ENCODE measurements at regions of chr18 and their contacts with region 1.

Region 1: DNA sequence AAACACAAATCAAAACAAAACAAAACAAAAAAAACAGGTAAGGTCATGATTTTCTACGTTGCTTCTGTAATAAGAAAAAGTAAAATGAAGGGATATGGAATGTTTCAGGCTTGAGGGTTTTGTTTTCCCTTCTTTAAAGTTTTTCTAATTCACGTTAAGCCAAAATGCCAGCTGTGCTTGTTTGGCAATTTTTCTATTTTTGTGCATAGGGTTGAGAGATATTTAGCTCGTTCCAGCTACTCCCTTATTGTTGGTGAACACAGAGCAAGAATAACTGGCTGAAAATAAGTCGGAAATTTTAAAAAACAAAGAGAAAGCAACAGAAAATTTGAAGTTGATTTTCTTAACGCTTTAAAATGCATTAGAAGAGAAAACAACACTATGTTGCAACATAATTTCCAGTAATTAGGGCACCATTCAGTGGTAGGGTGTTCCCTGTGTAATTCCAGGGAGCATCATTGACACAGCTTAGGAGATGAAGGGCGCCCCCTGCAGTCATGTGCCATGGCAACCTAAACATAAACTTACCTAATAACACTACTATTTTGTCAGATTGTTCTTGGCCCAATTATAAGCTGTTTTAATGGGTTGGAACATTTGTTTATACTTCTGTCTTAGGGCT is 99.5 kb downstream of the DTNA start:
- DNase-seq: no peak
- H3K4me3 ChIP-seq: no peak overlapping the region
- H3K27ac ChIP-seq: no peak overlapping the region
- H3K4me1 ChIP-seq: no peaks in the 10 kb centered on the region
- H3K27me3 ChIP-seq: no peaks in the 10 kb centered on the region
- CTCF ChIP-seq: peak; percentile 35; the same call in 1 of the 2 replicates

Region 2: GRCh38 chr18:34550902-34551301 is 258.7 kb before region 1 on chr18:
- CTCF ChIA-PET with region 1: interaction called, 10 read pairs
- POLR2A ChIA-PET with region 1: no interaction called
- intact Hi-C with region 1: no loop called
- DNase-seq: no peak
- H3K4me3 ChIP-seq: no peak overlapping the region
- H3K27ac ChIP-seq: no peak overlapping the region
- H3K4me1 ChIP-seq: no peaks in the 10 kb centered on the region
- H3K27me3 ChIP-seq: no peaks in the 10 kb centered on the region
- CTCF ChIP-seq: no peak

Region 3: DNA sequence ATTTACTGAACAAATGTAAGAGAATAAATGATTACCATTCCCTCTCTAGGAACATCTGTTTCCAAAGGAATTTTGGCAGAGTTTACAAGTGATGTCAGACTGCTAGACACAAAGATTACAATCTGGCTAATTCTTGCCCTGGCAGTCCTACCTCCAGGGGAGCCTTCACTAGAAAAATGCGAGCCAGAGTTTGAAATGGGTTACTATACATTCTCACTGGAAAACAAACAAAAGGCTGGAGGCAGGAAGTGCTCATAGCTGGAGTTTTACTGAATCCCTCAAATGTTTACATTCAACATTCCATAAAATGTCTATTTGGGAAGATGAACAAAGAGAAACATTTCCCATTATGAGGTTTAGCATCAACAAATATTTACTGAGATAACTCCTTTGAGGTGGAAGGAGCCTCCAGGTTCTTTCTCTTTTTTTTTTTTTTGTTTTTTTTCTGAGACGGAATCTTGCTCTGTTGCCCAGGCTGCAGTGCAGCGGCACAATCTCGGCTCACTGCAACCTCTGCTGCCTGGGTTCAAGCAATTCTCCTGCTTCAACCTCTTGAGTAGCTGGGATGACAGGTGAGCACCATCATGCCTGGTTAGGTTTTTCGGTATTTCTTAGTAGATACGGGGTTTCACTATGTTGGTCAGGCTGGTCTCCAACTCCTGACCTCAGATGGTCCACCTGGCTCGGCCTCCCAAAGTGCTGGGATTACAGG is 102.6 kb after region 1 on chr18:
- CTCF ChIA-PET with region 1: no interaction called
- POLR2A ChIA-PET with region 1: no interaction called
- intact Hi-C with region 1: no loop called
- DNase-seq: no peak
- H3K4me3 ChIP-seq: no peak overlapping the region
- H3K27ac ChIP-seq: no peak overlapping the region
- H3K4me1 ChIP-seq: no peaks in the 10 kb centered on the region; the same call in 1 of the 2 replicates
- H3K27me3 ChIP-seq: no peaks in the 10 kb centered on the region
- CTCF ChIP-seq: no peak